ENCODE measurements at regions of chr7 and their contacts with region 1.

Region 1: GRCh38 chr7:151123822-151124464 is 37.7 kb downstream of the AGAP3 start:
- DNase-seq: peak; percentile 70 to 96 (median 90)

Region 2: DNA sequence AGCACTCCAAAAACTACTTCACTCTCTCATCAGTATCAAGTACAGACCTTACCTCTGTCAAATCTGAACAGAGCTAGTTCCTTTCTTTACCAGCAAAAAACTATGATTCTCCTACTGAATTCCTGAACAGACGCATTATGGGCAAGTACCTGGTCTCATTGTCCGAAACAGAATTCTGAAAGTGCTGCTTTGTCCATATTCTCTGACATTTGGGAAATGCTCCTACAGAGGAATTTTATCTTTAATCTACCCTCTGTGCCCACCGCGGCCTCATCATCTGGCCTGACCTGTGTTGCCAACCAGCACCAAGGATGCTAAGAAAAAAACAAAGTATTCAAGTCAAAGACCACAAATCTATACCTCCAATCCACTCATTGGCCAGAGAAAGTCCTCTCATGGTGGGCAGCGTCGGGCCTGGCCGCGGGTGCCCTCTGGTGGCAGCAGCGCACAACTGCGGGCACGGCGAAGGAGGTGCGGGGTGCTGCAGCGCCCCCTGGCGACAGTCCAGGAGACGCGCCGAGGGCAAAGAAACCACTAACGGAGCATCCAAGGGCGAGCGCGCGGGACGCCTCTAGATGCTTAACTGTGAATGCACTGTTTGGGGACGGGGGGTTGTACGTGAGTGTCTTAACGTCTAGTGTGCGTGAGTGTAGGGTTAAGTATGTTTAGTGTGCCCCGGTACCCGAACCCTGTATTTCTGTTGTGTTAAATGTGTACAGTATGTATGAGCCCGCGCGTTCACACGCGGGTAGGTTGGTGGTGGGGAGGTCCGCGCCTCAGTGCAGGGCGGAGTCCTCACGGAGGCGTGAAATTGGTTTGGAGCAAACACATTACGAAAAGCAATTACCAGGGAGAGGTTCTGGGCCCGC is 48.6 kb after region 1 on chr7:
- intact Hi-C with region 1: loop called (anchors 1 kb)
- DNase-seq: peak; percentile 60 to 94 (median 83)

Measured in head of caudate nucleus (tissue), 42 donors.